Esophagus muscularis mucosa (tissue), 4 donors: ENCODE measurements at regions of chr17 and their contacts with region 1.

Region 1: DNA sequence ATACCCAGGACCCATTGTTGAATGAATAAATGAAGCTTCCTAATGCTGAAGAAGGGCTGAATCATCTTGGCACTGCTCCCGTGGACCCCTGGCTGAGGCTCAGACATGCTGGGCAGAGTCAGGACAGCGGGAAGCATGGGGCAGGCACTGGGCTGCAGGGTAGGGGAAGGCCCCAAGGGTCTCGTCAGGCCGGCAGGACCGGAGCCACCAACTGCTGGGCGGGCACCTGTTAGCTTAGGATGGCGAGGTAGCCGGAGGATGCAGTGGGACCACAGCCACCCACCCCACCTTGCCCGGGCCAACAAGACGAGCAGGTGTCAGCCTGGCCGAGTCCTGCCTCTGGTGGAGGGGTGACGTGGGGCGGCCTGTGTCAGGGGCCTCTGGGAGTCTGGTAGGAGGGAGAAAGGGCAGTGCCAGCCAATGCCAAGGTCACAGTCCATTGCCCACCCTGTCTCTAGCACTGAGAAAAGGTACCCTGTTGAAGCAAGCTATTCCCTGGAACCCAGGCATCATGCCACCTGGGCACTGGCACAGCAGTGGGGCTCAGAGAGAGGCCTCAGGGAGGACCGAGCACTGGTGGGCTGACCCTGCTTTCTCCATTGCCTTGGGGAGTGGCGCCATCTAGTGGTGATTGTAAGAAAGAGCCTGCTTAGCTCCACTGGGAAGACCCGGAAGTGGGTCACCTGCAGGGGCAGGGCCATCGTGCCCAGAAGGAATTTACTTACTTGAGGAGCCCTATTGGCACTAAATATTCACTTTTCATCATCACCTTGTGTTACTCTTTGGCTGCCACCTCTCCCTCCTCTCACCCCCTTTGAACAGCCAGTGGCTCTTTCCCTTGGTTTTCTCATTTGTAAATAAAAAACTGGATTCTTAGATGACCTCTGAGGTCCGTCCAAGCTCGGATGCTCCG is 3.0 kb upstream of the DLX3 start:
- DNase-seq: no peak
- H3K4me3 ChIP-seq: no peak overlapping the region
- H3K27ac ChIP-seq: no peak overlapping the region
- H3K4me1 ChIP-seq: peaks cover 33 to 50% (median 39%) of the 10 kb centered on the region in 4 donors
- H3K27me3 ChIP-seq: peaks cover 2 to 98% (median 44%) of the 10 kb centered on the region in 4 donors
- CTCF ChIP-seq: peak; percentile 84 to 98 (median 94)
- EP300 ChIP-seq: no peak
- POLR2A ChIP-seq: no peak

Region 2: GRCh38 chr17:49861150-49861892 is 136.7 kb before region 1 on chr17:
- intact Hi-C with region 1: loop called (anchors 1 kb)
- DNase-seq: no peak
- H3K4me3 ChIP-seq: no peak overlapping the region
- H3K27ac ChIP-seq: no peak overlapping the region
- H3K4me1 ChIP-seq: peaks cover 0 to 6% (median 5%) of the 10 kb centered on the region in 4 donors
- H3K27me3 ChIP-seq: peaks cover 0 to 19% (median 0%) of the 10 kb centered on the region in 4 donors
- CTCF ChIP-seq: peak; percentile 78 to 94 (median 80)
- EP300 ChIP-seq: no peak
- POLR2A ChIP-seq: no peak

Region 3: GRCh38 chr17:49880291-49881053 is 117.6 kb before region 1 on chr17:
- intact Hi-C with region 1: loop called (anchors 2 kb)
- DNase-seq: no peak
- H3K4me3 ChIP-seq: peak overlapping the region in 2 of 4 donors; percentile 9 to 27
- H3K27ac ChIP-seq: no peak overlapping the region
- H3K4me1 ChIP-seq: peaks cover 7 to 12% (median 9%) of the 10 kb centered on the region in 4 donors
- H3K27me3 ChIP-seq: peaks cover 0 to 65% (median 14%) of the 10 kb centered on the region in 4 donors
- CTCF ChIP-seq: peak in 2 of 3 experiments; percentile 88 to 93
- EP300 ChIP-seq: no peak
- POLR2A ChIP-seq: no peak

Region 4: GRCh38 chr17:49952209-49952911 is 45.7 kb before region 1 on chr17:
- intact Hi-C with region 1: loop called (anchors 2 kb)
- DNase-seq: peak; percentile 94
- H3K4me3 ChIP-seq: no peak overlapping the region
- H3K27ac ChIP-seq: no peak overlapping the region
- H3K4me1 ChIP-seq: no peaks in the 10 kb centered on the region
- H3K27me3 ChIP-seq: peaks cover 0 to 71% (median 2%) of the 10 kb centered on the region in 4 donors
- CTCF ChIP-seq: peak; percentile 58 to 78 (median 71)
- EP300 ChIP-seq: no peak
- POLR2A ChIP-seq: no peak

Region 5: GRCh38 chr17:50660042-50660847 is 662.2 kb after region 1 on chr17:
- intact Hi-C with region 1: no loop called
- DNase-seq: no peak
- H3K4me3 ChIP-seq: no peak overlapping the region
- H3K27ac ChIP-seq: peak overlapping the region in 3 of 4 donors; percentile 36 to 51 (median 42)
- H3K4me1 ChIP-seq: peaks cover 35 to 44% (median 40%) of the 10 kb centered on the region in 4 donors
- H3K27me3 ChIP-seq: no peaks in the 10 kb centered on the region
- CTCF ChIP-seq: no peak
- EP300 ChIP-seq: no peak
- POLR2A ChIP-seq: no peak